Natural killer cell (primary cell): ENCODE measurements at regions of chr17 and their contacts with region 1.

Region 1: GRCh38 chr17:1716076-1716995 is 6.2 kb upstream of the TLCD2 start:
- DNase-seq: peak; percentile 99 to 100
- ATAC-seq: peak; percentile 80 to 94 (median 83)
- H3K4me3 ChIP-seq: peak overlapping the region; percentile 59
- H3K4me3 Mint-ChIP-seq: peak overlapping the region; percentile 99
- H3K27ac ChIP-seq: peak overlapping the region; percentile 86
- H3K27ac Mint-ChIP-seq: peak overlapping the region; percentile 95 to 98
- H3K4me1 ChIP-seq: peaks cover 46% of the 10 kb centered on the region
- H3K4me1 Mint-ChIP-seq: peaks cover 30 to 52% of the 10 kb centered on the region in 2 donors
- H3K27me3 ChIP-seq: no peaks in the 10 kb centered on the region
- H3K27me3 Mint-ChIP-seq: peaks cover 0 to 2% of the 10 kb centered on the region in 2 donors
- CTCF ChIP-seq: no peak

Region 2: DNA sequence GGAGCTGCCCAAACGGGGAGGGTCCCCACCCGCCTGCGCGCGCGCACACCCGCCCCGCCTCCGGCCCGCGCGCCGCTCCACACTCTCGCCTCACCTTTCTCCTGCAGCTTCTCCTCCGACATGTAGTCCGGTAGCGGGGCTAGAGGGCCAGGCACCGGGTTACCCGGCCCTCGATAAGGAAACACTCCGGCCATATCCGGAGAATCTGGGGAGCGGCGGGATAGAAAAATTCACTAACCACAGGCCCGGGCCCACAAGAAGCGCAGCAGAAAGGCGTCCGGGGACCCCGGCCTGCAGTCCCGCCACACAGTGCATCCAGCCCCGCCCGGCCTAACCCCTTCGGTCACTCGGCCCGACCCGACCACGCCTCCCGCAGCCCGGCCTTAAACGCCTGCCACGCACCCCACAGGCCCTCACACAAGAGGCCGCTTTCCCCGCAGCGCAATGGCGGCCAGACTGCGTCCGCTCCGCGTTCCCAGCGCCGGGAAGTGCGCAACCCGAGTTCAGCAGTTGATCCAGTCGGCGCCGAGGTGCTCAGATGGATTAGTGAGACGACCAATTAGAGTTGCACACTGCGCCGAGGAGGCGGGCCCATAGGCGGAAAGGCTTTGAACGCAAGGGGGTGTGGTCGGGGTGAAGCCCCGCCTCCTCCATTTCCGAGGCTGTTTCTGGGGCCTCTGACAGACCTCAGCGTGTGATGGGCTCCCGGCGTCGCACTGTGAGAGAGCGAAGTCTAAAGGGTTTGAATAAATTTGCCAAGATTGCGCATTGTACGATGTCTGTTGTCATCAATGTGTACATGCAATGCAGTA is 31.8 kb before region 1 on chr17 and contains the start of gene PRPF8:
- intact Hi-C with region 1: loop called (anchors 1 kb)
- DNase-seq: peak; percentile 97 to 99
- ATAC-seq: peak; percentile 97 to 100 (median 98)
- H3K4me3 ChIP-seq: peak within 1 kb of the TSS; percentile 90
- H3K4me3 Mint-ChIP-seq: peak within 1 kb of the TSS; percentile 100
- H3K27ac ChIP-seq: peak within 1 kb of the TSS; percentile 92
- H3K27ac Mint-ChIP-seq: peak within 1 kb of the TSS; percentile 98
- H3K4me1 ChIP-seq: peaks cover 28% of the 10 kb centered on the region
- H3K4me1 Mint-ChIP-seq: peaks cover 38 to 44% of the 10 kb centered on the region in 2 donors
- H3K27me3 ChIP-seq: no peaks in the 10 kb centered on the region
- H3K27me3 Mint-ChIP-seq: no peaks in the 10 kb centered on the region
- CTCF ChIP-seq: no peak
- total RNA-seq, gene PRPF8: 475 to 508 (median 480) TPM

Region 3: DNA sequence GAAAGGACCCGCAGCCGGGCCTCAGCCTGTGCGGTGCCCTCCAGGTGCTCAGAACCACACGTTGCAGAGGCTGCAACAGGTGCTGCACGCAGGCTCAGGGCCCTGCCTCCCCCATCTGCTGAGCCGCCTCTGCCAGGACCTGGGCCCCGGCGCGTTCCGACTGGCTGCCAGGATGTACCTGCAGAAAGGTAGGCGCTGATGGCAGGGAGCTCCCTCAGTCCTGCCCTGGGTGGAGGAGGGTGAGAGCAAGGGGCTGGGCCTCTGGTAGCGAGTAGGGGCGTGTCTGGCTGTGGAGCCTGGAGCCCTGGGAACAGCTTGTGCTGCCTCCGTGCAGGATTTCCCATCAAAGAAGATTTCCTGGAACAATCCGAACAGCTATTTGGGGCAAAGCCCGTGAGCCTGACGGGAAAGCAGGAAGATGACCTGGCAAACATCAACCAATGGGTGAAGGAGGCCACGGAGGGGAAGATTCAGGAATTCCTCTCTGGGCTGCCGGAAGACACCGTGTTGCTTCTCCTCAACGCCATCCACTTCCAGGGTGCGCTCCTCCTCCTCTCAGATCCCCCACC is 30.7 kb after region 1 on chr17:
- intact Hi-C with region 1: no loop called
- DNase-seq: no peak
- ATAC-seq: no peak
- H3K4me3 ChIP-seq: no peak overlapping the region
- H3K4me3 Mint-ChIP-seq: no peak overlapping the region
- H3K27ac ChIP-seq: no peak overlapping the region
- H3K27ac Mint-ChIP-seq: no peak overlapping the region
- H3K4me1 ChIP-seq: peaks cover 17% of the 10 kb centered on the region
- H3K4me1 Mint-ChIP-seq: peaks cover 0 to 15% of the 10 kb centered on the region in 2 donors
- H3K27me3 ChIP-seq: no peaks in the 10 kb centered on the region
- H3K27me3 Mint-ChIP-seq: peaks cover 0 to 8% of the 10 kb centered on the region in 2 donors
- CTCF ChIP-seq: no peak

Region 4: DNA sequence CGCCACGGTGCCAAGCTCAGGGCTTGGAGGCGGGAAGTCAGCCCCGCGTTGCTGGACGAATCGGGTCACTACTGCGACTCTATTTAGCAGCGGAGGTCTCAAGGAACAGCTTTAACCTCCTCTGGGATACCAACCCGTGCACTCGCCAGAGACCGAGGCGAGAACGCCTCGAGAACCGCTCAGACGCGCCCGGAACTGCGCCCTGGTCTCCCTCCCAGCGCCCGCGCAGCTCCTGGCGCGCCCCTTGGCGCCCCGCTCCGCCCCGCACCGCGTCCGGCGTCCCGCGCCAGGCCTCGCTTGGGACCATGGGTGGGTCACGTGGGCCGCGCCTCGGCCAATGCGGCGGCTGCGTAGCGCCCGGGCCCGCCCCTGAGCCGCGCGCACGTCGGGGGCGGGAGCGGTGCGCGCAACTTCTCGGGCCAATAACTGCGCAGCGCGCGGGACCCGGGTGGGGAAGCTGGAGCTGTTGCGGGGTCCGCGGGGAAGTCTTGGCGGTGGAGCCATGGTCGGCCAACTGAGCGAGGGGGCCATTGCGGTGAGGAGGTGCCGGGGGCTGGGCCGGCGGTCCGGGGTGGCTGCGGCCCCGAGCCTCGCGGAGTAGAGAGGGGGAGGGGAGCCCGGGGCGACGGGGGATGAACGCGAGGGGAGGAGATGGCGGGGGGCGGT is 113.4 kb after region 1 on chr17 and contains the starts of genes RPA1 and SMYD4:
- intact Hi-C with region 1: loop called (anchors 1 kb)
- DNase-seq: peak; percentile 91 to 95
- ATAC-seq: peak; percentile 97 to 100 (median 99)
- H3K4me3 ChIP-seq: peak within 1 kb of the TSS; percentile 75
- H3K4me3 Mint-ChIP-seq: peak within 1 kb of the TSS; percentile 96
- H3K27ac ChIP-seq: peak within 1 kb of the TSS; percentile 75
- H3K27ac Mint-ChIP-seq: peak within 1 kb of the TSS; percentile 91
- H3K4me1 ChIP-seq: peaks cover 26% of the 10 kb centered on the region
- H3K4me1 Mint-ChIP-seq: peaks cover 43 to 46% of the 10 kb centered on the region in 2 donors
- H3K27me3 ChIP-seq: no peaks in the 10 kb centered on the region
- H3K27me3 Mint-ChIP-seq: no peaks in the 10 kb centered on the region
- CTCF ChIP-seq: no peak
- total RNA-seq, gene RPA1: 70.9 to 101 (median 98.9) TPM
- total RNA-seq, gene SMYD4: 20.3 to 37.8 (median 24.3) TPM

Region 5: DNA sequence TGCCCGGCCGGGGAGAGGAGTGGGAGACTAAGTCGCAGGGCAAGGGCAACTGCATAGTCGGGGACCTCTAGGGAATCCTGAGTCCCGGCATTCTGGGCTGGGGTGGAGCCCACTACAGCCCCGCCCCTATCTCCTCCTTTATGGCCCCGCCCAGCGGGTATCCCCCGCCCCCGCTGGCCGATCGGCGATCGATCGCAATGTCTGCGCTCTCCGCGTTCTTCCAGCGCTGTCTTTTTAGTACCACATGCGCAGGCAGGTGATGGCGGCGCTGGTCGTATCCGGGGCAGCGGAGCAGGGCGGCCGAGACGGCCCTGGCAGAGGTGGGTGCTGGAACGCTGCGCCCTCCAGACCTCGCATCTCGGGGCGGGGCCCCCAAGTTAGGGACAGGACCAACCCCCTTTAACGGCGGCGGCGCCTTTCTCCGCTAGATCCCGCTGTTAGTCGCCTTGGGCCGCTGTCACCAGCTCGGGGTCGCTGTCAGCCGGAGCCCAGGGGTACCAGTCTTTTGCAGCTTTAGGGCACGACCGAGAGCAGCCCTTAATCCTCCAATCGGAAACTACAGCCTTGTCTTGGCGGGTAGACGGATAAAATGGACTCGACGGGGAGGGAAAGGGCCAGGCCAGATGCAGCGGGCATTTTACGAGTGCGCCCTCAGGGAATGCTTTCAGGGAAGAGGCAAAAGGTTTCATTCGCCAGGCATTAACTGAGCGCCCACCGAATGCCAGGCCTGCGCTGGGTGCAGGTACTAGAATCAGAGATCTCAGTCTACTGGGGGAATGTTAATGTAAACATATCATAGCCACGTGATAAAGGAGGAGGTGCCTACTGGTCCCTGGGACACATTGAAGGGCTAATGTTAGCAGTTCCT is 313.8 kb after region 1 on chr17 and contains the start of gene DPH1:
- intact Hi-C with region 1: loop called (anchors 10 kb)
- DNase-seq: peak; percentile 76 to 91
- ATAC-seq: peak; percentile 88 to 95 (median 89)
- H3K4me3 ChIP-seq: peak within 1 kb of the TSS; percentile 94
- H3K4me3 Mint-ChIP-seq: peak within 1 kb of the TSS; percentile 92
- H3K27ac ChIP-seq: peak within 1 kb of the TSS; percentile 59
- H3K27ac Mint-ChIP-seq: peak within 1 kb of the TSS; percentile 79 to 83
- H3K4me1 ChIP-seq: peaks cover 31% of the 10 kb centered on the region
- H3K4me1 Mint-ChIP-seq: peaks cover 19 to 29% of the 10 kb centered on the region in 2 donors
- H3K27me3 ChIP-seq: peaks cover 8% of the 10 kb centered on the region
- H3K27me3 Mint-ChIP-seq: peaks cover 23 to 32% of the 10 kb centered on the region in 2 donors
- CTCF ChIP-seq: no peak
- total RNA-seq, gene DPH1: 60.2 to 65.2 (median 63.2) TPM

Region 6: GRCh38 chr17:2049333-2050299 is 333.3 kb after region 1 on chr17:
- intact Hi-C with region 1: no loop called
- DNase-seq: peak; percentile 89 to 93
- ATAC-seq: peak; percentile 65 to 86 (median 67)
- H3K4me3 ChIP-seq: peak overlapping the region; percentile 28
- H3K4me3 Mint-ChIP-seq: peak overlapping the region; percentile 82
- H3K27ac ChIP-seq: peak overlapping the region; percentile 2
- H3K27ac Mint-ChIP-seq: peak overlapping the region; percentile 61 to 74
- H3K4me1 ChIP-seq: peaks cover 44% of the 10 kb centered on the region
- H3K4me1 Mint-ChIP-seq: peaks cover 11 to 23% of the 10 kb centered on the region in 2 donors
- H3K27me3 ChIP-seq: peaks cover 5% of the 10 kb centered on the region
- H3K27me3 Mint-ChIP-seq: peaks cover 0 to 4% of the 10 kb centered on the region in 2 donors
- CTCF ChIP-seq: no peak

Region 7: DNA sequence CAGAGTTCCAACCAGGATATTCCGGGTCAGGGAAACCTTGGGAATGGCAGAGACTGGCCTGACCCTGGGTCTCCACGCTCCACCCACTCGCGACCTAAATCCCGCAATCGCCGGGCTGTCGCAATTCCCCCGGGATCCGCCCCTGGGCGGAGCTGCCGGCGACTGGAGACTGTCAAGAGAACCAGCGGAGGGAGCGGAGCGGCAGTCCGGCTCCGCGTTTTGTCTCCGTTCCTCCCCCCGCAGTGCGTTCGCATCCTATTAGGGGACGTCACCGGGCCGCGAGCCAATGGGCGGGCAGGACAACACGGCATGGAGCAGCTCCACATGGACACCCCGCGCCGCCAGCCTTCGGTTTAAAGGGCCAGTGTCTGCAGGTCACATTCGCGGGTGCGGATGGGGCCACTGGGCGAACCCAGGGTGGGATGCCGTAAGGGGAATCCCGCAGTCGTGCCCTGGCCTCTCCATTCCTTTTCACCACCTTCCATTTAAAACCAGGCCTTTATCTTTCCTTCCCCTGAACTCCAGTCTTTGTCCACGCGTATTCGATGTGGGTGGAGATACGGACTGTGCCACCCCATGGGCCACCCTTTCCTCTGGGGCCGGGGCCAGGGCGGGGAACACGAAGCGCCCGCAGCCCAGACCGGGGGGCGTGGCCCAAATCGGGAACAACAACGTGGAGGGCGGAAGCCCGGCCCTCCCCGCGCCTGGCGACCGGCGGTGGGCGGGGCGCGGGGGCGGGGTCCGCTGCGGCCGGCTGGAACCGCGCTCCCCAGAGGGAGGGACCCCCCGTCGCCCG is 685.3 kb after region 1 on chr17:
- intact Hi-C with region 1: loop called (anchors 1 kb)
- DNase-seq: peak; percentile 99 to 100
- ATAC-seq: peak; percentile 52 to 80 (median 67)
- H3K4me3 ChIP-seq: peak overlapping the region; percentile 61
- H3K4me3 Mint-ChIP-seq: peak overlapping the region; percentile 97
- H3K27ac ChIP-seq: peak overlapping the region; percentile 98
- H3K27ac Mint-ChIP-seq: peak overlapping the region; percentile 93 to 99
- H3K4me1 ChIP-seq: peaks cover 39% of the 10 kb centered on the region
- H3K4me1 Mint-ChIP-seq: peaks cover 25 to 52% of the 10 kb centered on the region in 2 donors
- H3K27me3 ChIP-seq: no peaks in the 10 kb centered on the region
- H3K27me3 Mint-ChIP-seq: no peaks in the 10 kb centered on the region
- CTCF ChIP-seq: no peak